Dorsolateral prefrontal cortex (tissue), 120 donors: ENCODE measurements at regions of chr1 and their contacts with region 1.

Region 1: GRCh38 chr1:248906009-248906752 is at the start of gene PGBD2:
- DNase-seq: peak; percentile 84 to 94 (median 90)
- H3K4me3 ChIP-seq: peak within 1 kb of the TSS; percentile 52 to 93 (median 77)
- H3K27ac ChIP-seq: peak within 1 kb of the TSS; percentile 73 to 98 (median 93)
- H3K27me3 ChIP-seq: no peaks in the 10 kb centered on the region
- CTCF ChIP-seq: peak in 55 of 56 donors; percentile 23 to 82 (median 65)
- total RNA-seq, gene PGBD2: 3.2 to 11.1 (median 6.2) TPM

Region 2: DNA sequence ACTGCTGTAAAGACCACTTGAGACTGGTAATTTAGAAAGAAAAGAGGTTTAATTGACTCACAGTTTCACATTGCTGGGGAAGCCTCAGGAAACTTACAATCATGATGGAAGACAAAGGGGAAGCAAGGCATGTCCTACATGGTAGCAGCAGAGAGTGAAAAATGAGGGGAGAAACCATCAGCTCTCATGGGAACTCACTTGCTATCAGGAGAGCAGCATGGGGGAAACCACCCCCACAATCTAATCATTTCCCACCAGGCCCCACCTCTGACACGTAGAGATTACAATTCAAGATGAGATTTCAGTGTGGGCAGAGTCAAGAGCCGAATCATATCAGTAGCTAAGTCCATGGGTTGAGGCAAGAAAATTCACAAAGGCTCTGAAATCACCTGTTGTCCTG is 126.8 kb before region 1 on chr1:
- intact Hi-C with region 1: no loop called
- DNase-seq: no peak
- H3K4me3 ChIP-seq: no peak overlapping the region
- H3K27ac ChIP-seq: no peak overlapping the region
- H3K27me3 ChIP-seq: peaks cover 0 to 11% (median 0%) of the 10 kb centered on the region in 45 donors
- CTCF ChIP-seq: no peak

Region 3: GRCh38 chr1:248837794-248838356 is 68.3 kb before region 1 on chr1 and contains the start of gene ZNF672:
- intact Hi-C with region 1: loop called in 1 of 2 experiments (anchors 1 kb)
- DNase-seq: peak; percentile 93 to 99 (median 98)
- H3K4me3 ChIP-seq: peak within 1 kb of the TSS; percentile 59 to 99 (median 92)
- H3K27ac ChIP-seq: peak within 1 kb of the TSS; percentile 81 to 100 (median 99)
- H3K27me3 ChIP-seq: no peaks in the 10 kb centered on the region
- CTCF ChIP-seq: peak in 22 of 56 donors; percentile 4 to 55 (median 15)
- total RNA-seq, gene ZNF672: 15.9 to 43.0 (median 23.4) TPM

Region 4: GRCh38 chr1:248852481-248853405 is 53.4 kb before region 1 on chr1:
- intact Hi-C with region 1: no loop called
- DNase-seq: peak in 7 of 10 donors; percentile 58 to 80 (median 72)
- H3K4me3 ChIP-seq: no peak overlapping the region
- H3K27ac ChIP-seq: peak overlapping the region in 54 of 59 donors; percentile 4 to 78 (median 62)
- H3K27me3 ChIP-seq: no peaks in the 10 kb centered on the region
- CTCF ChIP-seq: no peak

Region 5: GRCh38 chr1:248873409-248873992 is 32.7 kb before region 1 on chr1:
- intact Hi-C with region 1: loop called (anchors 1 kb)
- DNase-seq: peak; percentile 91 to 98 (median 97)
- H3K4me3 ChIP-seq: peak overlapping the region; percentile 48 to 95 (median 79)
- H3K27ac ChIP-seq: peak overlapping the region; percentile 82 to 99 (median 95)
- H3K27me3 ChIP-seq: no peaks in the 10 kb centered on the region
- CTCF ChIP-seq: peak in 15 of 56 donors; percentile 2 to 25 (median 11)